Naive thymus-derived CD4-positive, alpha-beta T cell (primary cell): ENCODE measurements at regions of chr17 and their contacts with region 1.

Region 1: GRCh38 chr17:60720763-60721531 is 43.3 kb downstream of the BCAS3 start:
- DNase-seq: peak in 7 of 9 donors; percentile 13 to 56 (median 43)
- ATAC-seq: peak; percentile 68
- H3K4me3 ChIP-seq: no peak overlapping the region
- H3K4me3 Mint-ChIP-seq: no peak overlapping the region
- H3K27ac ChIP-seq: no peak overlapping the region
- H3K27ac Mint-ChIP-seq: peak overlapping the region in 1 of 9 donors; percentile 17
- H3K4me1 ChIP-seq: no peaks in the 10 kb centered on the region
- H3K4me1 Mint-ChIP-seq: peaks cover 0 to 9% (median 3%) of the 10 kb centered on the region in 7 donors
- H3K27me3 ChIP-seq: no peaks in the 10 kb centered on the region
- H3K27me3 Mint-ChIP-seq: peaks cover 0 to 7% (median 0%) of the 10 kb centered on the region in 5 donors

Region 2: DNA sequence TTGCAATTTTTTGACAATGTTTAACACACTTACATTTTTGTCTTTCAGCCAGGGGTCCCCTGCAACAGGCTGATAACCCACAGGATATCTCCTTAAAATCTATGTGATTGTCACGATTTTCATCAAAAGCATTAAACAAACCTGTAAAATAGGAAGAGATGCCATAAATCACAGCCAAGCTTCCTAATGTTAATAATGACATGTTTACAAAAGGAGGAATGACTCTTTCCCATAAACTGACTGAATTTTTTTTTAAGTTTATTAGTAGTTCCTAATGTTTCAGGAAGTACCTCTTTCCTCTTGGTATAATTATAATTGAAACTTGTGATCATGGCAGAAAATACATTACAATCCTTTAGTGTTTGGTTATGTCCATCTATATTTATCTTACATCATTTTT is 451.5 kb before region 1 on chr17:
- CTCF ChIA-PET with region 1: no interaction called
- POLR2A ChIA-PET with region 1: no interaction called
- intact Hi-C with region 1: no loop called
- DNase-seq: no peak
- ATAC-seq: no peak
- H3K4me3 ChIP-seq: no peak overlapping the region
- H3K4me3 Mint-ChIP-seq: no peak overlapping the region
- H3K27ac ChIP-seq: no peak overlapping the region
- H3K27ac Mint-ChIP-seq: no peak overlapping the region
- H3K4me1 ChIP-seq: no peaks in the 10 kb centered on the region
- H3K4me1 Mint-ChIP-seq: no peaks in the 10 kb centered on the region
- H3K27me3 ChIP-seq: no peaks in the 10 kb centered on the region
- H3K27me3 Mint-ChIP-seq: no peaks in the 10 kb centered on the region

Region 3: GRCh38 chr17:60851181-60851580 is 130.2 kb after region 1 on chr17:
- CTCF ChIA-PET with region 1: no interaction called
- POLR2A ChIA-PET with region 1: no interaction called
- intact Hi-C with region 1: no loop called
- DNase-seq: no peak
- ATAC-seq: no peak
- H3K4me3 ChIP-seq: no peak overlapping the region
- H3K4me3 Mint-ChIP-seq: no peak overlapping the region
- H3K27ac ChIP-seq: no peak overlapping the region
- H3K27ac Mint-ChIP-seq: no peak overlapping the region
- H3K4me1 ChIP-seq: no peaks in the 10 kb centered on the region
- H3K4me1 Mint-ChIP-seq: peaks cover 0 to 4% (median 0%) of the 10 kb centered on the region in 7 donors
- H3K27me3 ChIP-seq: no peaks in the 10 kb centered on the region
- H3K27me3 Mint-ChIP-seq: peaks cover 0 to 6% (median 0%) of the 10 kb centered on the region in 5 donors

Region 4: DNA sequence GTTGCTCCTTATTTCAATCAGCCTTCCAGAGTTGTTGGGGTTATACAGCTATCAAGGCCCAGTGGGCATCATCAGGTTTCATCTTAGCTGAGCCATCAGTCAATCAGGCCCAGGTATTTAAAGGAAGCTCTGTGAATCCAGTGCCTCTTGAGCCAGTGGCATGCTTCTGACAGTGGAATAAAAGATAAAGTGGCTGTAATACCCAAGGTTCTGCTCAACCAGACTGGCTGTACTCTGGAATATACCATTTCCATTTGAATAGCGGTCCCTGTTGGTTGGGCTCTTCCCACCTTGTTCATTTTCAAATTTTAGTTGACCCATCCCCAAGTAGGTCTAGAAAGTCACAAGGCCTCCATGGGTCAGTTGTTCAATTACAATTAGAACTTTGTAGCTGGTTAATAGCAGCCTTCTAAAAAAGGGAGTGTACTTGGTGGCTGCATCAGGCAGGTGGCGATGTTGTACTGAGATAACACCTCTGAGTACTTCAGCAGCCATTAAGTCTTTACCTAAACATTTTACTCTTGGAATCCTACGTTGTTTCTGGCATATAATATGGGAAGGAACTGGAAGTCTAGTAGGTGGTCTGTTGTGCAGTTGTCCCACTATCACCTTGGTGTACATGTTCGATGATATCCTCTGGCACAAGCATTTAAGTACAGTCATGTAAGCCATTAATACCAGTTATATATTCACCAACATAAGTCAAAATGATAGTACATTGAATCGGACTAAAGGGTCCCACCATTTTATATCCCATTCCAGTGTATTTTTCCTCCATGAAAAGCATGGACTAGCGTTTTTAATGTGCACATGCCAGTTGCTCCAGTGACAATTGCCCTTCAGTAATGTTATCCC is 250.8 kb after region 1 on chr17:
- CTCF ChIA-PET with region 1: no interaction called
- POLR2A ChIA-PET with region 1: no interaction called
- intact Hi-C with region 1: loop called in 1 of 2 experiments (anchors 2 kb)
- DNase-seq: peak in 6 of 9 donors; percentile 8 to 28 (median 16)
- ATAC-seq: peak; percentile 50
- H3K4me3 ChIP-seq: no peak overlapping the region
- H3K4me3 Mint-ChIP-seq: no peak overlapping the region
- H3K27ac ChIP-seq: no peak overlapping the region
- H3K27ac Mint-ChIP-seq: no peak overlapping the region
- H3K4me1 ChIP-seq: no peaks in the 10 kb centered on the region
- H3K4me1 Mint-ChIP-seq: peaks cover 0 to 3% (median 0%) of the 10 kb centered on the region in 7 donors
- H3K27me3 ChIP-seq: no peaks in the 10 kb centered on the region
- H3K27me3 Mint-ChIP-seq: peaks cover 0 to 15% (median 0%) of the 10 kb centered on the region in 5 donors

Region 5: GRCh38 chr17:61389670-61390478 is 668.9 kb after region 1 on chr17:
- CTCF ChIA-PET with region 1: interaction called, 4 read pairs
- POLR2A ChIA-PET with region 1: no interaction called
- intact Hi-C with region 1: loop called in 1 of 2 experiments (anchors 1 kb)
- DNase-seq: peak in 5 of 9 donors; percentile 34 to 64 (median 53)
- ATAC-seq: peak; percentile 40
- H3K4me3 ChIP-seq: no peak overlapping the region
- H3K4me3 Mint-ChIP-seq: no peak overlapping the region
- H3K27ac ChIP-seq: no peak overlapping the region
- H3K27ac Mint-ChIP-seq: no peak overlapping the region
- H3K4me1 ChIP-seq: no peaks in the 10 kb centered on the region
- H3K4me1 Mint-ChIP-seq: peaks cover 0 to 8% (median 4%) of the 10 kb centered on the region in 7 donors
- H3K27me3 ChIP-seq: no peaks in the 10 kb centered on the region
- H3K27me3 Mint-ChIP-seq: peaks cover 1 to 26% (median 16%) of the 10 kb centered on the region in 5 donors

Region 6: DNA sequence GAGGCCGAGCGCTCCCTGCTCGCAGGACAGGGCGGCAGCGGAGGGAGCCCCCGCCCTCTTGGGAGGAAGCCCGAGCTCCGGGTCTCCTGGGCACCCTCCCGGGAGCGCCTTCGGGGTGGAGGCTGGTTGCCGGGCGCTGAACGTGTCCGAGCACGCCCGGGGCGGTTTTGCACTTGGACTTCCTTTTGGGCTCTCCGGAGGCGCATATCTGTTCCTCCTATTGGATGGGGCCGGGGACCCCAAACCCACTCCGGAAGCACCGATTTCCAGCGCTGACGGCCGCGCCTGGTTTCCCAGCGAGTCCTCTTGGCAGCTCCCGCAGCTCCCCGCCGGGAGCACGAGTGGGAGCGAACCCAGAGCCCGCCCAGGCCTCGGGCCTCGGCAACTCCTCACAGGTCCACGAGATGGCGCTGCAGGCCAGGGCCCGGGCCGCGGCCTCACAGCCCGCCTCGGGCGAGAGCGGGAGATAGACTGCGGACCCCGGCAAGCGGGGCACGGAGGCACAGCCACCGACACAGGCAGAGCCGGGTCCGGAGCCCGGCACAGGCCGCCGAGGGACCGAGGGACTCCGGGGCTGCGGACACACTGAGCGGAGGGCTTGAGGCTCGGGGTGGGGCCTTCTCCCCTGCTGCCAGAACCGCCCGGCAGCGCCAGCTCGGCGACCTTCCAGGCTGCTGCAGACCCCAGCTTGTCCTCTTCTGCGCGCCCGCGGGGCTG is 691.4 kb after region 1 on chr17:
- CTCF ChIA-PET with region 1: no interaction called
- POLR2A ChIA-PET with region 1: no interaction called
- intact Hi-C with region 1: loop called in 1 of 2 experiments (anchors 1 kb)
- DNase-seq: peak; percentile 59 to 91 (median 81)
- ATAC-seq: peak; percentile 88
- H3K4me3 ChIP-seq: peak overlapping the region; percentile 64
- H3K4me3 Mint-ChIP-seq: peak overlapping the region in 9 of 10 donors; percentile 56 to 85 (median 76)
- H3K27ac ChIP-seq: peak overlapping the region; percentile 37
- H3K27ac Mint-ChIP-seq: no peak overlapping the region
- H3K4me1 ChIP-seq: peaks cover 7 to 15% of the 10 kb centered on the region in 2 donors
- H3K4me1 Mint-ChIP-seq: peaks cover 12 to 31% (median 23%) of the 10 kb centered on the region in 7 donors
- H3K27me3 ChIP-seq: peaks cover 0 to 23% of the 10 kb centered on the region in 2 donors
- H3K27me3 Mint-ChIP-seq: peaks cover 22 to 59% (median 28%) of the 10 kb centered on the region in 5 donors

Region 7: GRCh38 chr17:61837175-61838051 is 1116.5 kb after region 1 on chr17:
- CTCF ChIA-PET with region 1: no interaction called
- POLR2A ChIA-PET with region 1: no interaction called
- intact Hi-C with region 1: loop called in 1 of 2 experiments (anchors 5 kb)
- DNase-seq: peak in 6 of 9 donors; percentile 16 to 31 (median 27)
- ATAC-seq: peak; percentile 70
- H3K4me3 ChIP-seq: no peak overlapping the region
- H3K4me3 Mint-ChIP-seq: no peak overlapping the region
- H3K27ac ChIP-seq: no peak overlapping the region
- H3K27ac Mint-ChIP-seq: no peak overlapping the region
- H3K4me1 ChIP-seq: no peaks in the 10 kb centered on the region
- H3K4me1 Mint-ChIP-seq: no peaks in the 10 kb centered on the region
- H3K27me3 ChIP-seq: no peaks in the 10 kb centered on the region
- H3K27me3 Mint-ChIP-seq: no peaks in the 10 kb centered on the region